ENCODE measurements at regions of chr6 and their contacts with region 1.

Region 1: DNA sequence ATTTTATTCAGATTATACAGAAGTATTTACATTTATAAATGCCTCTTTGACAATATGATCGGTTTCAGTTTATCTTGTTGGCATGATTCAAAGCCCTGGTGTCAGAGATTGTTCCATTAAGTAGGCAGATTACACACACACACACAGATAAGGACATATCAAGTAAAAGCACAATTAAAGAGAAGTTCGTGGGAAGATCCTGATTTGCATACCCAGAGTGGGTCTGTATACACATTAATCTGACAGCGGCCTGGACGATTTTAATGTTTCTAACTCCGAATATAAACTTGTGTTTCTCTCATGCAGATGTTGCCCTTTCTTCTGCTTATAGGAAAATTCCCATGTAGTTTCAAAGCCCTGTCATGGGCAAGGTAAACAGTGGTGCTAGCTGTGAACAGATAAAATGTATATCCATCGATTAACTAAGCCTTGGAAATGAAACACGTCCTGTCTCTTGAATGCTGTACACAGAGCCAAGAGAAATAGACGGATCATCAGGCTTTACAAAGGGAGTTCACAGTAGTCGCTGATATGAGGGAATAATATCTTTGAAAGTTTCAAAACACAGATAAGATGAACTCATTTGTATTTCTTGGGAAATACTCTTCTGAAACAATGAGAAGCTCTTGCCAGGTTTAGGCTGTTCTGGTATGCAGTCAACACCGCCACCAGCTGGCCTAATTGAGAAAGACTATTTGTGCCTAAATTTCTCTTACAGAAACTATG is 108.2 kb upstream of the GMDS start:
- DNase-seq: peak; percentile 39
- ATAC-seq: peak; percentile 82
- H3K4me3 ChIP-seq: no peak overlapping the region
- H3K27ac ChIP-seq: no peak overlapping the region
- H3K4me1 ChIP-seq: no peaks in the 10 kb centered on the region
- H3K27me3 ChIP-seq: no peaks in the 10 kb centered on the region
- CTCF ChIP-seq: peak; percentile 82

Region 2: DNA sequence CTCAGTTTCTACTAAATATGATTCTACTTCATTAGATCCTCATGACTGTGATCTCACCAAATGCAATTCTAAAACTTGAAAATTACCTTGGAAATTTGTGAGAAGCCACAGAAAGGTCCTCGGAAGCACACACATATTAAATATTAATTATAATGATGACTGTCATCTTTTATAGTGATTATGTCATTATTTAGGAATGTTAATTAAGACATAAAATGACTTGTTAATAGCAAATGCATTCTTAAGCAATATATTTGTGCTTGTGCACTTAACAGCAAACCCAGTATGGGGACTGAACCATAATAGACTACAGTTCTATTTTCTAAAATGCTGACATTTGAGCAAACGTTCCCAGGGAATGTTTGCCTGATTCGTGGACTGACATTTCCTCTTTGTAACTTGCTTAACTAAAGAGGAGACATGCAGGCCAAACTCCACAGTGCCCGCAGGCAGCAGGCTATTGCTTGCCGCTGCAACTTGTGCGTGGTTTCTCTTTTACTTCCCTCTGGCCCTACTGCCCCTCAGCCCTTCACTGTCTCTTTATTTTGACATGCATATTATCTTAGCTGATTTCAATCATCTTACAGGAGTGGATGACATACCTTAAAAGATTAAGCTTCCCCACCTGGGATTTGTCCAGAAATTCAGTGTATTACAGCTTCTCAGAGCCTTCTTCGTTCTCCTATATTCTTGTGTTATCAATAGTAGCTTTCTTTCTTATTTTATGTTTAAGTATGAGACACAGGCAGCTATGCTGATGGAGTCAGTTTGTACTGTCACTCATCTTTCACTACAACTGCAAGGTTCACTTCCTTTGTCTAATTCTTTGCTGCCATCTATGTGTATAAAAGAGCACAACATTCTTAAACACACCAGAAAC is 249.7 kb before region 1 on chr6:
- CTCF ChIA-PET with region 1: no interaction called
- POLR2A ChIA-PET with region 1: no interaction called
- in situ Hi-C with region 1: no loop called
- intact Hi-C with region 1: loop called (anchors 10 kb)
- DNase-seq: peak; percentile 54
- ATAC-seq: peak; percentile 95
- H3K4me3 ChIP-seq: no peak overlapping the region
- H3K27ac ChIP-seq: no peak overlapping the region
- H3K4me1 ChIP-seq: peaks cover 3% of the 10 kb centered on the region; the same call in 1 of the 2 replicates
- H3K27me3 ChIP-seq: no peaks in the 10 kb centered on the region
- CTCF ChIP-seq: peak; percentile 65; the same call in 1 of the 2 replicates

Region 3: DNA sequence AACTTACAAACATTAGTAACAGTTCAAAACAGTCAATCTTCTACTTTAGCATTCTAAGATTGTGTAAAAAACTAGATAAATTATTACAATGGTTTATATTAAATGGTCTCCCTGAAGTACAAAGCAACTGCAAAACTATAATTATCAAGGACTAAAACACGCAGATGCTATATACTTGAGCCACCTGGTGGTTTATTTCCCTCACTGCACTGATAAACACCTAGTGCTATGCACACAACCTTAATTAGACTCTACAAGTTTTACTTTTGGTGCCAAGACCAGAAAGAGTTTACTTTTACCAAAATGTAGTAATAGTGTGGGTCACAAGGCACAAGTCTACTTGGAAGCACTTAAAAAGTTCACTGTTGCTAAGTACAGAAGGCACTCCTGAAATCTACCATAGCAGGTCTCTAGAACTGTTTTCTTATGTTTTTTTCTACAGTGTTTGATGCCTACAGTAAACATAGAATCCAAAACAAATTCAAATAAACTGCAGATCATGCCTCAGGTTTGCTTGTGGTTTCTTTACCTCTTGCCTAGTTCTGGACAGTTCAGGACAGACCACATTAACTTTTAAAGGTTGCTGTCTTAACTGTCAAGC is 157.4 kb before region 1 on chr6:
- CTCF ChIA-PET with region 1: no interaction called
- POLR2A ChIA-PET with region 1: no interaction called
- in situ Hi-C with region 1: no loop called
- intact Hi-C with region 1: no loop called
- DNase-seq: peak; percentile 48
- ATAC-seq: peak; percentile 82
- H3K4me3 ChIP-seq: no peak overlapping the region
- H3K27ac ChIP-seq: no peak overlapping the region
- H3K4me1 ChIP-seq: peaks cover 3% of the 10 kb centered on the region; the same call in 1 of the 2 replicates
- H3K27me3 ChIP-seq: no peaks in the 10 kb centered on the region
- CTCF ChIP-seq: peak; percentile 74; the same call in 1 of the 2 replicates

Region 4: DNA sequence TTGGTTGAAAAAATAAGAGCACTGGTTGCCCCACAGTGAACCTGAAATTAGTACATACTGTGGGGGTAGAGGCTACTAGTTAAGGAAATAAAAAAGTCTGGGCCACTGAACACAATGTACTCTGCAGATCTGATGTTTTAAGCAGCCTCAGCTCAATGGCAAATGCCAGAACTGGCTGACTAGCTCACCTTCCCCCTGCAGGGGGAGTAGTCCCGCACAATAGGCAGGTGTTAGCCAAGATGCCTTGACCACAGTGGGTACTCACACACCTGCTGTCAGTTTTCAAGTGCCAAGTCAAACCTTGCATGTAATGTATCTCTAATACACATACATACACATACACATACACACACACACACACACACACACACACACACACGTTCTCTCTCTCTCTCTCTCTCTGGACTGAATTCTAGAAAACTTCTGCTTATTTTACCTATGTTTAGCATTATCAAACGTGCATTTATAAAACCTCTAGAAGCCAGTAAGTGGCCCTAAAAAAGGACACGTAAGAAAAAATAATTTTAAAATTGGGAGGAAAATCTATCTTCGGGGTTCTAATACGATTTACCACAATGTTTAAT is 144.3 kb before region 1 on chr6:
- CTCF ChIA-PET with region 1: interaction called, 15 read pairs
- POLR2A ChIA-PET with region 1: no interaction called
- in situ Hi-C with region 1: no loop called
- intact Hi-C with region 1: loop called (anchors 1 kb)
- DNase-seq: peak; percentile 59
- ATAC-seq: peak; percentile 93
- H3K4me3 ChIP-seq: no peak overlapping the region
- H3K27ac ChIP-seq: no peak overlapping the region
- H3K4me1 ChIP-seq: no peaks in the 10 kb centered on the region
- H3K27me3 ChIP-seq: no peaks in the 10 kb centered on the region
- CTCF ChIP-seq: peak; percentile 81

Region 5: DNA sequence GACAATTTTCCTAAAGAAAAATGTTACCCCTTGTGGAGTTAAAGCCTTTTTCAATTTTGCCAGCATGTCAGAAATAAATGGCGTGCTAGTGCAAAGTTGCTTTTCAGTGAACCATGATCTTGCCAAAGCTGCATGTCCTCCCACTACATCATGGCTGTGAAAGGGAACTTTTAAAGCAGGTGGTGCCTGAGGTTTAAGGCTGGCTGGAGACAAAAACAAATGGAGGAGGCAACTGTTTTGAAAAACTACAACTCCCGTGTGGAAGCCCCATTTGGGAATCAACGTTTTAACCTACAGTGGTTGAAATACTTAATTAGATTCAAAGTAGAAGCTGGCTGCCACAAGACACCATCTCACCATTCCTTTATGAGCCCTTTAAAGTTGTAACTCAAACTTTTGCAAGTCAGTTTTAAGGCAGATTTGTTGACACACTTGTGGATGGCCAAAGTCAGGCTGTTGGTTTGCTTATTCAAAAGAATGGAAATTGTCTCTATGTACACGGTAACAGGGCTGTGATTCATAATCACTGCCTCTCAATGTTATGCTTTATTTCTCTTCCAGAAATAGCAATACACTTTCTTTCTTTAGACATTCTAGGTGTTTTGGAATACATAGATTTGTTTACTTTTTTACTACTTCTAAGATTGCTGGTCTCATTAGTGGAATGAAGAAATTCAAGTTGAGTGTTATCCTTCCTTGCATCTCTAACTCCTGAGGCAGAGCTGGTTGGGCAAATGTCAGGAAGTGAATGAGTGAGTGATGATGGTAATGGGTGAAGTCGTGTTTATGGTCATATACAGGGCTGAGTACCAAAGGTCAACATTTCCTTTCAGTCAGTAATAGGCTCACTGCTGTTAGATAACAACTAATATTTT is 88.3 kb after region 1 on chr6:
- CTCF ChIA-PET with region 1: no interaction called
- POLR2A ChIA-PET with region 1: no interaction called
- in situ Hi-C with region 1: no loop called
- intact Hi-C with region 1: no loop called
- DNase-seq: no peak
- ATAC-seq: no peak
- H3K4me3 ChIP-seq: no peak overlapping the region
- H3K27ac ChIP-seq: no peak overlapping the region
- H3K4me1 ChIP-seq: no peaks in the 10 kb centered on the region
- H3K27me3 ChIP-seq: peaks cover 6% of the 10 kb centered on the region; the same call in 1 of the 2 replicates
- CTCF ChIP-seq: no peak

Region 6: GRCh38 chr6:2502781-2503241 is 149.2 kb after region 1 on chr6:
- CTCF ChIA-PET with region 1: interaction called, 10 read pairs
- POLR2A ChIA-PET with region 1: no interaction called
- in situ Hi-C with region 1: no loop called
- intact Hi-C with region 1: no loop called
- DNase-seq: no peak
- ATAC-seq: no peak
- H3K4me3 ChIP-seq: no peak overlapping the region
- H3K27ac ChIP-seq: no peak overlapping the region
- H3K4me1 ChIP-seq: no peaks in the 10 kb centered on the region
- H3K27me3 ChIP-seq: peaks cover 16% of the 10 kb centered on the region
- CTCF ChIP-seq: no peak

Measured in Panc1 (cell line).